HEK293T (cell line): ENCODE measurements at regions of chr2 and their contacts with region 1.

Region 1: DNA sequence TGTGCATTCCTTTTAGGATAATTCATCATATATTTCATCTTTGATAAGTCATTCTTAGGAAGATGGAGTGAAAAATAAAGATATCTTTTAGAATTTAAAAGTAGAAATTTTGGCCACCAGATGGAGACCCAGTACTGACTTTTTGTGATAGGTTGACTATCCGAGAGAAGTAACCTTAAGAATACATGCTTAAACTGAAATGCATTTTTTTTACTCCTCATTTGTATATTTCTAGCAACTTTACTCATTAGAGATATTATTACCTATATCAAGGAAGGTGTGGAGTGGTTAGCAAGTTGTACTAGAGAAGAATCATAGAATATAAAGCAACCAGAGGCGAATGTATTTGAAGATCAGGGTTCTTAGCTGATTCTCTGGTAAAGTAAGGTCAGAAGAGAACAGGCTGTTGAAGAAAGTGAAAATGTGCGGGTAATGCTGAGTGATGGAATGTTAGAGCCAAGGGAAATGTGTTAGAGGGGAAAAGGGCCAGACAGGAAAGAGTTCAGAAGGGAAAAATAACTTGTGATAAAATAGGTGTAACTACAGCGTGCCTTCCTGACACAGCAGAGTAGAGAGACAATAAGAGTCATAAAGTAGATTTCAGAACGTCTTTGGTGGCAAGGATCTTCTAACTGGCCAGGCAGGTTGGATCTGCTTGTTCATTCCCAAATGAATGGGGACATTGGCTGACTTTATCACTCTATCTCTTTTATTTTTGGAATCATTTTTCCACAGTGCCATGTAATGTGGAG is 52.3 kb downstream of the TDRD15 start:
- DNase-seq: no peak

Region 2: GRCh38 chr2:21165350-21165749 is 10.7 kb before region 1 on chr2:
- CTCF ChIA-PET with region 1: no interaction called
- POLR2A ChIA-PET with region 1: no interaction called
- DNase-seq: no peak

Region 3: DNA sequence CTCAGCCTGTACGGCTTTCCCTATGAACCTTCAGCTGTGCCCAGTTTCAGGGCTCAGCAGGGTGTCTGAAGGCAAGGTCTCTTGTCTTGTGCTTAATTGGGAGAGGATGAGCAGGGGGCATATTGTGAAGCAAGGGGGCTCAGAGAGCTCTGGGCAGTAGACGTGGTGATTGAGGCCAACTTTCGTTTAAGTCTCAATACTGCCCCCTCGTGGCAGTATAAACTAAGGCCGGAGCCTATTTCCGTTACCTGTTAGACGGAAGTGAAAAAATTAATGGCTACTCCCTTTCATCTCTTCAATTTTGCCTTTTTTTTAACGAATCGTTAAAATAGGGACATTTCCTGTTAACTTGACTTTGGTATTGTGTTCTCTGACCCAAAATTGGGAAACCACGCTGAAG is 141.1 kb after region 1 on chr2:
- CTCF ChIA-PET with region 1: interaction called, 10 read pairs
- POLR2A ChIA-PET with region 1: no interaction called
- DNase-seq: peak; percentile 63